ENCODE measurements at regions of chr1 and their contacts with region 1.

Region 1: GRCh38 chr1:40385437-40386358 is 12.2 kb downstream of the SMAP2 start:
- DNase-seq: no peak
- ATAC-seq: peak; percentile 71
- H3K4me3 Mint-ChIP-seq: peak overlapping the region; percentile 74
- H3K27ac Mint-ChIP-seq: peak overlapping the region; percentile 96
- H3K4me1 Mint-ChIP-seq: peaks cover 97% of the 10 kb centered on the region
- H3K27me3 Mint-ChIP-seq: no peaks in the 10 kb centered on the region
- CTCF ChIP-seq: no peak

Region 2: DNA sequence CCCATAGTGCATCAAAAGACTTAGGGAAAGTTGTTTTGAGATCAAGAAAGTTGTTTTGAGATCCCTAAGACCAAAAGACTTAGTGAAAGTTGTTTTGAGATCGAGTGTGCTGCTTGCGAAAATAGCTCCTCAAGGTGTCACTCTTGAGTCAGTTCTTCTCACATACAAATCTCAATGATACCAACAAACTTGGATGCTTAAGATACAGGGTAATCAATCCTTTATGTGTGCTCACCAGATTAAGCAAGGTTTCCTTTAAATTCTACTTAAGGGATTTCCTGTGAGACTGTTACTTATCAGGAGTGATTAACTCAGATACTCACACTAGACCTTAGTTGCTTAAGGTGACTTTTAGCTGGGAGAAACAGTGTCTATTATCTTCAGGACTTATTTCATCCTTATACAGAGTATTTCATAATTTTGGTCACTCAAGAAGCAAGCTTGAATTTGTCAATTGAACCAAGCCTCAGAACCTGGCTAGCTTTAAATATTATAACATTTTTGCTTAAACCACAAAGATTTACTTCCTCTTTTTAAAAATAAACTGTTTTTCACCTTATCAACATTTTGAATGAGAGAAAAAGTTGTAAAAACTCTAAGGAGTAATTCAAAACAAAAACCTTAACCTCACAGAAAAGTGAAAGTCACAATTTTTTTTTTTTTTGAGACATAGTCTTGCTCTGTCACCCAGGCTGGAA is 232.5 kb before region 1 on chr1:
- CTCF ChIA-PET with region 1: interaction called, 4 read pairs
- POLR2A ChIA-PET with region 1: interaction called, 12 read pairs
- intact Hi-C with region 1: no loop called
- DNase-seq: no peak
- ATAC-seq: peak; percentile 77
- H3K4me3 Mint-ChIP-seq: peak overlapping the region; percentile 74
- H3K27ac Mint-ChIP-seq: peak overlapping the region; percentile 90
- H3K4me1 Mint-ChIP-seq: peaks cover 27% of the 10 kb centered on the region
- H3K27me3 Mint-ChIP-seq: no peaks in the 10 kb centered on the region
- CTCF ChIP-seq: no peak

Region 3: GRCh38 chr1:40352126-40352525 is 33.6 kb before region 1 on chr1:
- CTCF ChIA-PET with region 1: interaction called, 3 read pairs
- POLR2A ChIA-PET with region 1: interaction called, 21 read pairs
- intact Hi-C with region 1: no loop called
- DNase-seq: no peak
- ATAC-seq: peak; percentile 94
- H3K4me3 Mint-ChIP-seq: peak overlapping the region; percentile 65
- H3K27ac Mint-ChIP-seq: peak overlapping the region; percentile 81
- H3K4me1 Mint-ChIP-seq: peaks cover 54% of the 10 kb centered on the region
- H3K27me3 Mint-ChIP-seq: no peaks in the 10 kb centered on the region
- CTCF ChIP-seq: no peak

Region 4: DNA sequence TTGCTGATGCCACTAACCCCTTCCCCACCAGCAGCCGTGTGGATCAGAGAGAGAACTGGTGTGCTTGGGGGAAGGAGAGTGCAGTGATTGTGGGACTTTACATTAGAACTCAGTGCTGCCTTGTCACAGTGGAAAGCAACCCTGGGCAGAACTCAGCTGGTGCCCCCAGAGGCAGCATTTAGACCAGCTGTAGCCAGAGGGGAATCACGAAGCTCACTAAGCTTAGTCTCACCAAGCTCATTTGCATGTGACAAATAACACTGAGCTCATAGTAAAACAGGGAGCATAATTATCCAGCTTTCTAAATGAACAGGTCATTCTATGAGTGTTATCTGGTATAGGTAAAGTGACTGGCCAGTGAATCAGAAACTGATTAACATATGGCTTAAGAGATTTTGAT is 22.0 kb before region 1 on chr1:
- CTCF ChIA-PET with region 1: interaction called, 5 read pairs
- POLR2A ChIA-PET with region 1: interaction called, 32 read pairs
- intact Hi-C with region 1: no loop called
- DNase-seq: peak; percentile 45
- ATAC-seq: peak; percentile 100
- H3K4me3 Mint-ChIP-seq: peak overlapping the region; percentile 5
- H3K27ac Mint-ChIP-seq: peak overlapping the region; percentile 74
- H3K4me1 Mint-ChIP-seq: peaks cover 19% of the 10 kb centered on the region
- H3K27me3 Mint-ChIP-seq: no peaks in the 10 kb centered on the region
- CTCF ChIP-seq: no peak

Region 5: DNA sequence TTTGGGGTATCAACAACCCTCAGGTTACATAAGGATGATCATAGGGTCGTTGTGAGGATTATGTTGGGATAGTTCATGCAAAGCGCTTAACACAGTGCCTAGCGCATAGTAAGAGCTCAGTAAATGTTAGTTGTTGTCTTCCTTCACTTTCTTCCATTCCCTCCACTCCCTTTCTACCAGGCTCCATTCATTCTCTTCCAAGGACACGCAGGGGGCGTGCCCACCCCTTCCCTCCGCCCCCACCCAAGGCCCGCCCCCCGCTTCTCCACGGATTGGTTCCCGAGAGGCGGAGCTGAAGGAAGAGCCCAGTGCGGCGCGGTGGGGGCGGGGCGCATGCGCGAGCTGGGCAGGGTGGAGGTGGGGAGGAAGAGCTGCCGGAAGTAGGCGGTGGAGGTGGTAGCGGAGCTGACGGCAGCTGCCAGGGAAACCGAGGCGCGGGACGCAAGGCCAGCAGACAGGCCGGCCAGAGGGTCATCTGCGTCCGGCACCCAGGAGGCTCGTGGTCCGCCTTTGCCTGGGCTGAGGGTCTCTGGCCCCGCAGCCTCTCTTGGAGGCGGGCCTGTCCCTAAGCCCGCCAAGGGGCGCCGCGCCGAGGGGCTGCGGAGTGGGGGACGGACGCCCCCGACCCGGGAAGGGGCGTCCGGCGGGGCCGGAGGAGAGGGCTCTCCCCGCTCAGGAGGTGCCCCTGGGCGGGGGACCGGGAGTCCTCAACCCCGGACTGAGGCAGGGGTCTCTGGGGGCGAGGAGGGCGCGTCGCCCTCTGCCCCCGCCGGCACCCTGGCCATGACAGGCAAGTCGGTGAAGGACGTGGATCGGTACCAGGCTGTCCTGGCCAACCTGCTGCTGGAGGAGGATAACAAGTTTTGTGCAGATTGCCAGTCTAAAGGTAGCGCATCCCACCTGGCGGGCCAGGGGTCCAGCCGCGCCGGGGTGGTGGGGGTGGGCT is 12.1 kb before region 1 on chr1 and contains the start of gene SMAP2:
- CTCF ChIA-PET with region 1: interaction called, 22 read pairs
- POLR2A ChIA-PET with region 1: interaction called, 625 read pairs
- intact Hi-C with region 1: loop called (anchors 1 kb)
- DNase-seq: peak; percentile 91
- ATAC-seq: peak; percentile 88
- H3K4me3 Mint-ChIP-seq: peak within 1 kb of the TSS; percentile 97
- H3K27ac Mint-ChIP-seq: peak within 1 kb of the TSS; percentile 96
- H3K4me1 Mint-ChIP-seq: peaks cover 52% of the 10 kb centered on the region
- H3K27me3 Mint-ChIP-seq: no peaks in the 10 kb centered on the region
- CTCF ChIP-seq: no peak
- total RNA-seq, gene SMAP2: 202 and 220 TPM in 2 replicates

Measured in activated B cell treated with CpG ODN at 0.5 μM for 24 hours (primary cell).